Activated CD8-positive, alpha-beta T cell treated with anti-CD3 and anti-CD28 coated beads, Interleukin-2, amount 10 ng/mL, durations not matched to agents 7 days and 5 days (primary cell): ENCODE measurements at regions of chr13 and their contacts with region 1.

Region 1: DNA sequence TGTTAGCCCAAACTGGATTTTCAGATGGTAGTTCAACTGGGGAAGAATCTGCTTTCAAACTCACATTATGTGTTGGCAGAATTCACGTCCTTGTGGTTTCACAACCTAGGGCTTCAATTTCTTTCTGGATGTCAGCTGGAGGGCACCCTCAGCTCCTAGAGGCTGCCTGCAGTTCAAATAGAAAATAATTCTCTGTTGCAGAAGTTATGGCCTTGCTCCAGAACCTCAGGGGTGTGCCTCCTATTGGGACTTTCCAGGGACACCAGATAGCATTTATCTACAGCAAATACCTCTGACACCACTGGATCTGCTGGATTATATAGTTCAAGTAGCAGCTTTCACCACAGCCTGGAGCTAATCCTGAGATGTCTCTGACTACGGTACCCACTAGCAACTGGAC is 11.8 kb upstream of the RB1 start:
- DNase-seq: no peak
- ATAC-seq: no peak
- H3K4me3 Mint-ChIP-seq: no peak overlapping the region
- H3K27ac Mint-ChIP-seq: no peak overlapping the region
- H3K4me1 Mint-ChIP-seq: peaks cover 9% of the 10 kb centered on the region
- H3K27me3 Mint-ChIP-seq: peaks cover 16% of the 10 kb centered on the region

Region 2: DNA sequence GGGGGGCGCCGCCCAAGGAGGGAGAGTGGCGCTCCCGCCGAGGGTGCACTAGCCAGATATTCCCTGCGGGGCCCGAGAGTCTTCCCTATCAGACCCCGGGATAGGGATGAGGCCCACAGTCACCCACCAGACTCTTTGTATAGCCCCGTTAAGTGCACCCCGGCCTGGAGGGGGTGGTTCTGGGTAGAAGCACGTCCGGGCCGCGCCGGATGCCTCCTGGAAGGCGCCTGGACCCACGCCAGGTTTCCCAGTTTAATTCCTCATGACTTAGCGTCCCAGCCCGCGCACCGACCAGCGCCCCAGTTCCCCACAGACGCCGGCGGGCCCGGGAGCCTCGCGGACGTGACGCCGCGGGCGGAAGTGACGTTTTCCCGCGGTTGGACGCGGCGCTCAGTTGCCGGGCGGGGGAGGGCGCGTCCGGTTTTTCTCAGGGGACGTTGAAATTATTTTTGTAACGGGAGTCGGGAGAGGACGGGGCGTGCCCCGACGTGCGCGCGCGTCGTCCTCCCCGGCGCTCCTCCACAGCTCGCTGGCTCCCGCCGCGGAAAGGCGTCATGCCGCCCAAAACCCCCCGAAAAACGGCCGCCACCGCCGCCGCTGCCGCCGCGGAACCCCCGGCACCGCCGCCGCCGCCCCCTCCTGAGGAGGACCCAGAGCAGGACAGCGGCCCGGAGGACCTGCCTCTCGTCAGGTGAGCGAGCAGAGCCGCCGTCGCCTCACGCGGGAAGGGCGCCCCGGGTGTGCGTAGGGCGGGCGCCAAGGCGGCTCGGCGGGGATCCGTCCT is 11.8 kb after region 1 on chr13 and contains the start of gene RB1:
- CTCF ChIA-PET with region 1: interaction called, 4 read pairs
- POLR2A ChIA-PET with region 1: interaction called, 12 read pairs
- DNase-seq: peak; percentile 94
- ATAC-seq: peak; percentile 85
- H3K4me3 Mint-ChIP-seq: peak within 1 kb of the TSS; percentile 94
- H3K27ac Mint-ChIP-seq: peak within 1 kb of the TSS; percentile 98
- H3K4me1 Mint-ChIP-seq: peaks cover 29% of the 10 kb centered on the region
- H3K27me3 Mint-ChIP-seq: no peaks in the 10 kb centered on the region
- total RNA-seq, gene RB1: 61.7 to 64.6 TPM